Activated CD4-positive, alpha-beta T cell treated with anti-CD3 and anti-CD28 coated beads, Interleukin-2, amount 10 ng/mL, durations not matched to agents 24 days and 14 days (primary cell): ENCODE measurements at regions of chr22 and their contacts with region 1.

Region 1: DNA sequence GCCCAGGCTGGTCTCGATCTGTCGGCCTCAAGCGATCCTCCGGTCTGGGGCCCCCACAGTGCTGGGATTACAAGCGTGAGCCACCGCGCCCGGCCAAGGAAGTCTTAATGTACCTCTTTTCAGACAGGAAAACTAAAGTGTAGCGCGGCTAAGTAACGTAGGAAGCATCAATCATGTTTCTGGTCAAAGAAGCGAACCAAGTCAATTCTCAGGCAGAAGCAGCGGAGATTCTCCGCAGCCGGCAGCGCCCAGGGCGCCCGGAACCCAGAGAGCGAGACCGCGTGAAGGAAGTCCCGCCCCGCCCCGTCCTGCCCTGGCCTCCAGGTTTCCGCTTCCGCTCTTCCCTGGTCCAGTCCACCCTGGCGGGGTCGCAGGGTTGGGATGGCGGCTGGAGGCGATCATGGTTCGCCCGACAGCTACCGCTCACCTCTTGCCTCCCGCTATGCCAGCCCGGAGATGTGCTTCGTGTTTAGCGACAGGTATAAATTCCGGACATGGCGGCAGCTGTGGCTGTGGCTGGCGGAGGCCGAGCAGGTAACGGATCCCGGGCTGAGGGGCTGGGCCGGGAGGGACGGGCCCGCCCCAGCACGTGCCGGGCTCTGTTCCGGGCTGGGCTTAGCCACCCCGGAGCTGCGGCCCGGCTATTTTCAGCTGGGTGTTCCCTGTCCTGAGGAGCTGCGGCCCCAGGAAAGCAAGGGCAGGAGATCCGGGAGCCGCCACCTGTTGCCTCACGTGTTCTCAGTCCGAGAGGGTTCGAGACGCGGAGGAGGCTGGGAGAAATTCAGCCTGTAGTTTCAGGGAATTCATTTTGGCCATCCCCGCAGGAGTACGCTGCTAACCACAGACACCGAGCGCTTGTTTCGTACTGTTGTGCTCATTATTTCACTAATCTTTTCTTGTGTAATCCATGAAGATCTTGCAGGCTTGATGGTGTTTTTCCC is at the start of gene ADSL:
- DNase-seq: peak; percentile 96
- H3K4me3 Mint-ChIP-seq: peak within 1 kb of the TSS; percentile 93
- H3K27ac Mint-ChIP-seq: peak within 1 kb of the TSS; percentile 97
- H3K4me1 Mint-ChIP-seq: peaks cover 38% of the 10 kb centered on the region
- H3K27me3 Mint-ChIP-seq: no peaks in the 10 kb centered on the region
- total RNA-seq, gene ADSL: 172 and 173 TPM in 2 replicates

Region 2: GRCh38 chr22:40044102-40044869 is 302.2 kb before region 1 on chr22:
- intact Hi-C with region 1: loop called (anchors 1 kb)
- DNase-seq: peak; percentile 100
- H3K4me3 Mint-ChIP-seq: peak overlapping the region; percentile 92
- H3K27ac Mint-ChIP-seq: peak overlapping the region; percentile 99
- H3K4me1 Mint-ChIP-seq: peaks cover 14% of the 10 kb centered on the region
- H3K27me3 Mint-ChIP-seq: peaks cover 9% of the 10 kb centered on the region

Region 3: DNA sequence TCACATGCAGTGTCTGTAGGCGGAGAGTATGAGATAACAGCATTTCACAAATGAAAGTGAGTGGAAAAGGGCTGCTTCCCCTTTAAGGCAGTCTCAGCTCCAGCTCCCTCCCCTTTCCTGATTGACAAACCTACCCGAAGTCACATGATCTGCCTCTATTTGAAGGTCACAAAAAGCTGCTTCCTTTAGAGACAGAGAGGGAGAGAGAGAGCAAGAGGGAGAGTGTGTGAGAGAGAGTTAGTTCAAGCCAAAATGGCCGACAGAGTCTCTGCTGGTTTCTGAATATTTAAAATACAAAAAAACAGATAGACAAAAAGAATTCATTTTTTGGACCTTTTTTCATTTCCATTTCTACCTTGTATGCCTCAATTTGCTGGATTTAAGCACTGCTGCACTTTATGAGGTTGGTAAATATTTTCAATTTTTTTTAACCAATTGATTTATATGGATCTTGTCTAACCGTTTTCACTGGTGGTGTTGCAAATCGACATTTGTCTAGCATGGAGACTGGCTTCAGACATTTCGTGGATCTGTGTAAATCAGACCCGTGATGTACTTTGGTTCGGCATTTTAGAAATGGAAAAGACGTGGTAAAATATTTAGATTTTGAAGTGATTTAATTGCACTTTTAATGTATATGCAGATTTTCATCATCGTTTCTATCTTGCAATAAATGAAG is 168.6 kb before region 1 on chr22 and contains the start of gene TNRC6B:
- intact Hi-C with region 1: loop called (anchors 1 kb)
- DNase-seq: peak; percentile 95
- H3K4me3 Mint-ChIP-seq: peak within 1 kb of the TSS; percentile 80
- H3K27ac Mint-ChIP-seq: peak within 1 kb of the TSS; percentile 91
- H3K4me1 Mint-ChIP-seq: peaks cover 45% of the 10 kb centered on the region
- H3K27me3 Mint-ChIP-seq: no peaks in the 10 kb centered on the region
- total RNA-seq, gene TNRC6B: 27.3 and 31.3 TPM in 2 replicates

Region 4: GRCh38 chr22:40215266-40215665 is 131.2 kb before region 1 on chr22:
- intact Hi-C with region 1: loop called (anchors 5 kb)
- DNase-seq: no peak
- H3K4me3 Mint-ChIP-seq: peak overlapping the region; percentile 64
- H3K27ac Mint-ChIP-seq: peak overlapping the region; percentile 90
- H3K4me1 Mint-ChIP-seq: peaks cover 63% of the 10 kb centered on the region
- H3K27me3 Mint-ChIP-seq: no peaks in the 10 kb centered on the region

Region 5: GRCh38 chr22:40276996-40277823 is 69.2 kb before region 1 on chr22:
- intact Hi-C with region 1: loop called (anchors 1 kb)
- DNase-seq: no peak
- H3K4me3 Mint-ChIP-seq: no peak overlapping the region
- H3K27ac Mint-ChIP-seq: peak overlapping the region; percentile 9
- H3K4me1 Mint-ChIP-seq: peaks cover 25% of the 10 kb centered on the region
- H3K27me3 Mint-ChIP-seq: no peaks in the 10 kb centered on the region

Region 6: DNA sequence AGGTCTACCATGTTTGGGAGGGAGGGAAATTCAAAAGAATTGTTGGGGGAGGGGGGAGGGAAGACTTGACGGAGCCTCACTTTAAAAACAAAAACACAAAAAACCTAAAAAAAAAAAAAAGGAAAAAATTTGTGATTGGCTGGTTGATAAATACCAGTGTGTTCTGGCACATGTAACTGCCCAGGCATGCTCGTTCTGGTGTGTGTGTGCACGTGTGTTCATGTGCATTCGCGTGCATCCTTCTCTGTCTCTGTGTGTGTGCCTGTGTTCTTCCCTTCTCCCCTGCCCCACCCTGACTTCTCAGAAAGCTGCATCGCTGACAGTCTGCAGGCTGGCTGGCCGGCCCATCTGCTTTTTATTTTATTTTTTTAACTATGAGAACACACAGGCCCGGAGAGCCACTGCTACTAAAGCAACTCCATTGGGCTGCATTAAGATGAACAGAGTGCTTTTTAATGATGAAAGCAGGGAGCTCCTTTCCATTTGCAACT is 22.7 kb before region 1 on chr22:
- intact Hi-C with region 1: loop called (anchors 1 kb)
- DNase-seq: peak; percentile 81
- H3K4me3 Mint-ChIP-seq: peak overlapping the region; percentile 81
- H3K27ac Mint-ChIP-seq: peak overlapping the region; percentile 99
- H3K4me1 Mint-ChIP-seq: peaks cover 60% of the 10 kb centered on the region
- H3K27me3 Mint-ChIP-seq: no peaks in the 10 kb centered on the region